ENCODE measurements at regions of chr14 and their contacts with region 1.

Region 1: GRCh38 chr14:90383075-90383730 is 13.6 kb upstream of the CALM1 start:
- DNase-seq: peak; percentile 99
- ATAC-seq: peak; percentile 91
- H3K4me3 ChIP-seq: peak overlapping the region; percentile 60 to 97 (median 92)
- H3K4me3 Mint-ChIP-seq: no peak overlapping the region
- H3K27ac ChIP-seq: peak overlapping the region; percentile 93 to 98
- H3K27ac Mint-ChIP-seq: no peak overlapping the region
- H3K4me1 ChIP-seq: peaks cover 15 to 24% of the 10 kb centered on the region in 2 donors
- H3K4me1 Mint-ChIP-seq: peaks cover 12% of the 10 kb centered on the region
- H3K27me3 ChIP-seq: no peaks in the 10 kb centered on the region
- H3K27me3 Mint-ChIP-seq: no peaks in the 10 kb centered on the region
- CTCF ChIP-seq: no peak

Region 2: DNA sequence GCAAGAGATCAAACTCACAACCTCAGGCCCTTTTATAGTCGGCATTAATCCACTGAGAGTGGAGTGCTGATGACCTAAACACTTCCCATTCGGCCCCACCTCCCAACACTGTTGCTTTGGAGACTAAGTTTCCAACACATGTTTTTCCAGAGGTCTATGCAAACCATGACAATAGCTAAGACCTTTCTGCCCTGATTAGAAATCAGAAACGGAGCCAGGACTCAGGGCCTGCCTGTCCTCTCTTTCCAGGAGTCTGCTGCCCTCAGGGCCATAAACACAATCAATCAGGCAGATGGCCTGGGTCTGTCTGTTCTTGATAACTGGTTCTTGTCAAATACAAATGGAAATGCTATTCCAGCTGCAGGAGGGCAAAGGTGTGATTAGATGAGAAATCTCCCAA is 224.1 kb before region 1 on chr14:
- CTCF ChIA-PET with region 1: no interaction called
- POLR2A ChIA-PET with region 1: no interaction called
- intact Hi-C with region 1: no loop called
- DNase-seq: no peak
- ATAC-seq: no peak
- H3K4me3 ChIP-seq: no peak overlapping the region
- H3K4me3 Mint-ChIP-seq: no peak overlapping the region
- H3K27ac ChIP-seq: no peak overlapping the region
- H3K27ac Mint-ChIP-seq: no peak overlapping the region
- H3K4me1 ChIP-seq: no peaks in the 10 kb centered on the region
- H3K4me1 Mint-ChIP-seq: no peaks in the 10 kb centered on the region
- H3K27me3 ChIP-seq: peaks cover 0 to 3% (median 0%) of the 10 kb centered on the region in 4 experiments
- H3K27me3 Mint-ChIP-seq: peaks cover 24% of the 10 kb centered on the region
- CTCF ChIP-seq: no peak

Region 3: GRCh38 chr14:90256354-90257131 is 126.7 kb before region 1 on chr14 and contains the start of gene PSMC1:
- CTCF ChIA-PET with region 1: interaction called, 3 read pairs
- POLR2A ChIA-PET with region 1: interaction called, 4 read pairs
- intact Hi-C with region 1: loop called (anchors 1 kb)
- DNase-seq: peak; percentile 89
- ATAC-seq: peak; percentile 94
- H3K4me3 ChIP-seq: peak within 1 kb of the TSS; percentile 75 to 92 (median 81)
- H3K4me3 Mint-ChIP-seq: peak within 1 kb of the TSS; percentile 99
- H3K27ac ChIP-seq: peak within 1 kb of the TSS; percentile 34 to 82
- H3K27ac Mint-ChIP-seq: peak within 1 kb of the TSS; percentile 97
- H3K4me1 ChIP-seq: peaks cover 14 to 25% of the 10 kb centered on the region in 2 donors
- H3K4me1 Mint-ChIP-seq: peaks cover 38% of the 10 kb centered on the region
- H3K27me3 ChIP-seq: peaks cover 0 to 5% (median 2%) of the 10 kb centered on the region in 4 experiments
- H3K27me3 Mint-ChIP-seq: peaks cover 3% of the 10 kb centered on the region
- CTCF ChIP-seq: no peak
- total RNA-seq, gene PSMC1: 50.2 and 51.6 TPM in 2 replicates

Region 4: DNA sequence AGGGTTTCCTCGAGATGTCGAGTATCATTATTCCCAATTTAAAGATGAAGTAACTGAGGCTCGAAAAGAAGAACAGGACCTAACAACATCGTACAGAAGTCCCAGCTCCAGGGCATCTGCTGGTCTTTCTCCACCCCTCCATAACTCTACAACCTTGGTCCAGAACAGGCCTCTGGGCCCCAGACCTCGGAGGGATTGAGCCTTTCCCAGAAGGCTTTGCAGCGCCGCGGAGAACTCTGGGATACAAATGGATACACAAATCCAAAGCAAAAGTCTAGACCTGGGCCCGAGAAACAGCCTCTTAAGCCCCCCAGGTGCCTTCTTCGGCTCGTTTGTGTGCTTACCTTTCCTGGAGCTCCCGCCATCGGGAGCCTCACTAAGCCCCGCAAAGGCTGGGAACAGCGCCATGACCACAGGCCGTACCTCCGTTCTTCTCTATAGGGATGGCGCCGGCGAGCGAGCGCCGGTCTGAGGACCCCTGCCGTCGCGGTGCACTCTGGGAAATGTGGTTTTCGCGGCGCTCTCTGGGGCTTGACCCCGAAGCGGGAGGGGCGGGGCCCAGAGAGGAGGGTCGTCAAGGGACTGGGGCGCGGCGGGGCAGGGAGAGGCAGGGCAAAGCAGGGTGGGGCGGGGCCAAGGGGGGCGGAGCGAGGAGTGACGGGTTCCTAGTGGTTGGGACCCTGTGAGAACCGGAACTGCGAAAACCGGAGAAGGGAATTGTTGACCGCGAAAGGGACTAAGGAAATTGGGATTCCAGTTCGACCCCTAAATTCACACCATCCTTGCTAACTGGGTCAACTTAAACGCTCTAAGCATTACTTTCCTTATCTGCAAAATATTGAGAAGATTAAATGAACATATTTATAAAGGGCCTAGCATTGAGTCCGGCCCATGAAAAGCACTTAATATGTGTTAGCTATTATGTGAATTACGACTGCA is 51.4 kb before region 1 on chr14 and contains the start of gene NRDE2:
- CTCF ChIA-PET with region 1: interaction called, 3 read pairs
- POLR2A ChIA-PET with region 1: interaction called, 5 read pairs
- intact Hi-C with region 1: loop called (anchors 1 kb)
- DNase-seq: peak; percentile 95
- ATAC-seq: peak; percentile 98
- H3K4me3 ChIP-seq: peak within 1 kb of the TSS; percentile 57 to 89 (median 79)
- H3K4me3 Mint-ChIP-seq: peak within 1 kb of the TSS; percentile 90
- H3K27ac ChIP-seq: peak within 1 kb of the TSS; percentile 67 to 77
- H3K27ac Mint-ChIP-seq: peak within 1 kb of the TSS; percentile 96
- H3K4me1 ChIP-seq: peaks cover 15 to 17% of the 10 kb centered on the region in 2 donors
- H3K4me1 Mint-ChIP-seq: peaks cover 22% of the 10 kb centered on the region
- H3K27me3 ChIP-seq: peaks cover 0 to 12% (median 4%) of the 10 kb centered on the region in 4 experiments
- H3K27me3 Mint-ChIP-seq: peaks cover 12% of the 10 kb centered on the region
- CTCF ChIP-seq: no peak
- total RNA-seq, gene NRDE2: 35.8 and 37.7 TPM in 2 replicates

Region 5: DNA sequence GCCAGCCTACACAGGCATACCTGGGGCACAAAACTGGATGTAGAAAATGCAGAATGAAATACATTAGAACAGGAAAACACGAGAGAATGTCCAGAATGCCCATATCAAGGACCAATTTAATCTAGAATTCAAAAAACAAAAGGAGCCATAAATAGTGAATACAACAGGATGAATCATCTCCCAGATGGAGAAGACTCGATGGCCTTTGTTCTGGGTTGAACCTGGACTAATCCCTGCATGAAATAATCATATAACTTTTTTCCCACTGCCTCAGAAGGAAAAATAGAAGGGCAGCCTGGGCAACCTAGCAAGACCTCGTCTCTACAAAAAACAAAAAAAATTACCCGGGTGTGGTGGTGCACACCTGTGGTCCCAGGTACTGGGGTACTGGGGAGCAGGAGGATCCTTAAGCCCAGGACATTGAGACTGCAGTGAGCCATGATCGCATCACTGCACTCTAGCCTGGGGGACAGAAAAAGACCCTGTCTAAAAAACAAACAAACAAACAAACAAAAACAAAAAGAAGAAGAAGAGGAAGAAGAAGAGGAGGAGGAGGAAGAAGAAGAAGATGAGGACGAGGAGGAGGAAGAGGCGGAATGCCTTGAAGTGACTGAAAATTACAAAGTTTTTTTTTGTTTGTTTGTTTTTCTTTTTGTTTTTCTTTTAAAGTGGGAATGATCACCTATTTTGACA is 21.2 kb before region 1 on chr14:
- CTCF ChIA-PET with region 1: no interaction called
- POLR2A ChIA-PET with region 1: no interaction called
- intact Hi-C with region 1: no loop called
- DNase-seq: no peak
- ATAC-seq: no peak
- H3K4me3 ChIP-seq: no peak overlapping the region
- H3K4me3 Mint-ChIP-seq: no peak overlapping the region
- H3K27ac ChIP-seq: no peak overlapping the region
- H3K27ac Mint-ChIP-seq: no peak overlapping the region
- H3K4me1 ChIP-seq: no peaks in the 10 kb centered on the region
- H3K4me1 Mint-ChIP-seq: no peaks in the 10 kb centered on the region
- H3K27me3 ChIP-seq: peaks cover 0 to 3% (median 0%) of the 10 kb centered on the region in 4 experiments
- H3K27me3 Mint-ChIP-seq: peaks cover 32% of the 10 kb centered on the region
- CTCF ChIP-seq: no peak

Measured in B cell (primary cell).